Prostate gland (tissue), 2 donors: ENCODE measurements at regions of chr1 and their contacts with region 1.

Region 1: DNA sequence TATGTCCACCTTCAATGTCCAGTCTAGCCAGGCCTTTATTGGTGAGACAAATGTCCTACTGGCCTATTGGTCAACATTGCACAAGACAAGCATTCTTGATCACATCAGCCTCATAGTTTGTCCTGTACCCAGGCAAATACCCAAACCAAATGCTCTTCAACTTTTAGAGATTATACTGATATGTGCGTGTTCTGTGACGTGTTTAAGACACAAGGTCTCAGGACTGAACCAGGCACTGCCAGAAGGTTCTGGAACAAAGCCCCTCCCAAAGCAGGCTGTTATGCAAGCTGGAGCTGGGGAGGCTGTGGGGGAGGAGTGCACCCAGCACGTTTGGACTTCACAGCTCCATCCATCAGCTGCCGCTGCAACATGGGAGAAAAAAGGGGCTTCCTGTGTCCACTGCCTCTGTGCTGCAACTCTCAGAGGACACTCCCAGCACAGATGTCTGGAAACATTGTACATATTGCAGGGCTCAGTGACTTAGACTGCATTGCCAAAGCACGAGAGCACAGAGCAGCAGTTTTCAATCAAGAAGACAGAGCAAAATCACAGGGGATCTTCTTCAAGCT is 45.9 kb downstream of the NID1 start:
- DNase-seq: no peak
- H3K4me3 ChIP-seq: no peak overlapping the region
- H3K27ac ChIP-seq: peak overlapping the region; percentile 69 to 72
- H3K4me1 ChIP-seq: no peaks in the 10 kb centered on the region
- H3K27me3 ChIP-seq: no peaks in the 10 kb centered on the region
- CTCF ChIP-seq: no peak
- POLR2A ChIP-seq: no peak

Region 2: DNA sequence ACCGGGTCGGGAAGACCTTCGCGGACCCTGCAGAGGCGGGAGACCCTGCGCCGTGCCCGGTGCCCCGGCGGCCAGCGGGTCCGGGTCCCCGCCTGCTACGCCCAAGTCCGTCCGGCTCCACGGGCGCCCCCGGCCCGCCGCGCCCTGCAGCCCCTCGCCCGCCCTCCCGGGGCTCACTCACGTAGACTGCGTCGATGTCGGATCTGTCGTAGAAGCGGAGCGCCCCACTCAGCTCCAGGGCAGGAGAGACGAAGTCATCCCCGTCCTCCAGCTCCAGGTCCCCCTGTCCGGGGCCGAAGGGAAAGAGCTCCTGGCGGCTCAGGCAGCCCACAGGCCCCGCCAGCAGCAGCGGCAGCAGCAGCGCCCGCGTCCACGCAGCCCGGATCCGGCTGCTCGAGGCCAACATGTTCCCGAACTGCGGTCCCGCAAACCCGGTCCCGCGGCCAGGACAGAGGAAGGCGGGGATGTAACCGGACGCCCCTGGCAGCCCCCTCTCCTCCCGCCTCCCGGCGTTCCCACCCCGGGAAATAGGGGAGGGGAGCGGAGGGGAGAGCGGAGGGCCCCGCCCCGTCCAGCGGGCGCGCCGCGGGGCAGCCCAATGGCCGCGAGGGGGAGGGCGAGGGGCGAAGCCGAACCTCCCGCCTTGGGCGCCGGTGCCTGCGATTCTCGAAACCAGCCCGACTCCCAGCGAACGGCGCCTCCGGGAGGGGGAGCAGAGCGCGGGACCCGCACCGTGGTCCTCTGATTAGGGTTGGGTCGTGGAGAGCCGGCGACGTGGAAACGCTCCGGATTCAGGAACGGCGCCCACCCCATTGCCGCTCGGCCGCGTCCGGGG is 45.9 kb after region 1 on chr1 and contains the start of gene NID1:
- intact Hi-C with region 1: loop called (anchors 5 kb)
- DNase-seq: peak; percentile 63
- H3K4me3 ChIP-seq: peak within 1 kb of the TSS; percentile 61 to 82
- H3K27ac ChIP-seq: peak within 1 kb of the TSS; percentile 86 to 92
- H3K4me1 ChIP-seq: no peaks in the 10 kb centered on the region
- H3K27me3 ChIP-seq: no peaks in the 10 kb centered on the region
- CTCF ChIP-seq: peak in 3 of 4 experiments; percentile 12 to 47 (median 37)
- POLR2A ChIP-seq: peak; percentile 64
- total RNA-seq, gene NID1: 21.6 to 74.9 TPM

Region 3: DNA sequence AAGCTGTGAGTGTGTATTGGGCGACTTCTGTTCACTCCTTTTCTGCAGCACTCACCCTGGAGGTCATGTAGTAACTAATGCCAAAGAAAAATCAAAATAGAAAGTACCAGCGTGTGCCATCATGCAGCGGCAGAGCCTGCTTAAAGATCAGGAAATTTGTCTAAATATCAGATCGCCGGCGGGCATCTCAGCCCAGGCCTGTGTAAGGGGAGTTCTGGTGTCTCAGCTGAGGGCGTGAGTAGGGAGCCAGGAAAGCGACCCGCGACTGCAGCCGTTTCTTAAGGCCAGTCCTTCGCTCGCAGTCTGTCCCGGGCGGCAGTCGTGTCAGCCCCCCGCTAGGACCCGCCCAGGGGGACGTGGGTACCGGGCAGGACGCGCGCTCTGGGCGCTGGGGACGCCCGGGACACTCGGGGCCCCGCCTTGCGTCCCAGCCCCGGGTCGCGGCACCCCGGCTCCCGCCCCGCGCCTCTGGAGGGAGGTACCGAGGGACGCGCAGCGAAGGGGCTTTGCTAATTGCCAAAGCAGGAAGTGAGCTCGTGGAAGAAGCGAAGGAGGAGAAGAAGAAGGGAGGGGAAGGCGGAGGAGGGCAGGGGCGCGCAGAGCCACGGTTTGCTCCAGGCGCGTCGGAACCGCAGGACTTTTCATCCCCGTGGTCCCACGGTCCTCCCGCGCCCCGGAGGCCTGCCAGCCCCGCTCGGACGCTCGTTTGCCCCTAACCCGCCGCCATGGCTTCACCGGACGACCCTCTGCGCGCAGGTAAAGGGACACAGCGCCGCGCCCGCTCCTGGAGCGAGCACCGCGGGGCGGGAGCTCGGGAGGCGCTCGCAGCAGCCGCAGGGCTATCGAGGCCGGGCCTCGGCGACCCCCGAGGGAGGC is 376.2 kb after region 1 on chr1:
- intact Hi-C with region 1: no loop called
- DNase-seq: peak; percentile 52
- H3K4me3 ChIP-seq: peak overlapping the region; percentile 57 to 61
- H3K27ac ChIP-seq: peak overlapping the region; percentile 70
- H3K4me1 ChIP-seq: no peaks in the 10 kb centered on the region
- H3K27me3 ChIP-seq: no peaks in the 10 kb centered on the region
- CTCF ChIP-seq: no peak
- POLR2A ChIP-seq: peak; percentile 40